Activated naive CD4-positive, alpha-beta T cell treated with anti-CD3 and anti-CD28 coated beads for 36 hours (primary cell): ENCODE measurements at regions of chr2 and their contacts with region 1.

Region 1: DNA sequence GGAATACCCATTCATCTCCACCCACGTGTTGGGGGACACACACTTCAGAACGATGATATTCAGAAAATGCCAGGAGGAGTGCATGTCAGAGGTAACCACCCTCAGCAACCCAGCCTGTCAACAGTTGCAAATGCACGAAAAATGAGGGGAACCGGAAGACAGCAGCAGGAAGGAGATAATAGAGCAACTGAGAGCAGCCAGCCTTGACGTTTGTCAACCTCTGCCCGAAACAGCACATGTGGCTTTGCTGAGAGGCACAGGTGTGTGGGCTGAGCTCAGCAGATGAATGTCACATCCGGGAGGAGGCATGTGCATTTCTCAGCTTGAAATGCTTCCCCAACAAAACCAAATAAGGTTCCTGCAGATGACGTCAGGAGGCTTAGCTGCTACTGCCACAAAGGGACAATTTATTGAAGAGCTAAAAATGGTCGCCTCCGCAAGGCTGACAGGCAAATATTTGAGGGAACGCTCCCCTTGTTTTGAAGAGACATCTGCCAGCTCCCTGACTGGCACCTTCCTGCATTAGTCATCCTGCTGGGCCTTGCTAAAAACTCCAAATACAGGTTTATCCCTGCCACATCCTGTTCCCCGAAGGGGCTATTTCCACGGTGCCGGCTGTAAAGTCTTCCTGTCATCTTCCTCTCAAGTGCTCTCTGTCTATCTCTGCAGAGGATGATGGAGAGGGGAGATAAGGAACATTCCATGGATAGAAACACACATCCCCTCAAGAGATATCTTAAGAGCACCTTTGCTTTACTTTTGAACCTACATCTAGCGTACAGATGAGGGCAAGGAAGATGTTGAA is 418.9 kb downstream of the NBAS start:
- DNase-seq: peak; percentile 90
- H3K4me3 Mint-ChIP-seq: peak overlapping the region; percentile 20
- H3K27ac Mint-ChIP-seq: peak overlapping the region; percentile 90
- H3K4me1 Mint-ChIP-seq: peaks cover 23% of the 10 kb centered on the region
- H3K27me3 Mint-ChIP-seq: peaks cover 5% of the 10 kb centered on the region

Region 2: GRCh38 chr2:15243762-15244161 is 101.5 kb after region 1 on chr2:
- CTCF ChIA-PET with region 1: no interaction called
- intact Hi-C with region 1: no loop called
- DNase-seq: no peak
- H3K4me3 Mint-ChIP-seq: no peak overlapping the region
- H3K27ac Mint-ChIP-seq: no peak overlapping the region
- H3K4me1 Mint-ChIP-seq: peaks cover 4% of the 10 kb centered on the region
- H3K27me3 Mint-ChIP-seq: no peaks in the 10 kb centered on the region

Region 3: DNA sequence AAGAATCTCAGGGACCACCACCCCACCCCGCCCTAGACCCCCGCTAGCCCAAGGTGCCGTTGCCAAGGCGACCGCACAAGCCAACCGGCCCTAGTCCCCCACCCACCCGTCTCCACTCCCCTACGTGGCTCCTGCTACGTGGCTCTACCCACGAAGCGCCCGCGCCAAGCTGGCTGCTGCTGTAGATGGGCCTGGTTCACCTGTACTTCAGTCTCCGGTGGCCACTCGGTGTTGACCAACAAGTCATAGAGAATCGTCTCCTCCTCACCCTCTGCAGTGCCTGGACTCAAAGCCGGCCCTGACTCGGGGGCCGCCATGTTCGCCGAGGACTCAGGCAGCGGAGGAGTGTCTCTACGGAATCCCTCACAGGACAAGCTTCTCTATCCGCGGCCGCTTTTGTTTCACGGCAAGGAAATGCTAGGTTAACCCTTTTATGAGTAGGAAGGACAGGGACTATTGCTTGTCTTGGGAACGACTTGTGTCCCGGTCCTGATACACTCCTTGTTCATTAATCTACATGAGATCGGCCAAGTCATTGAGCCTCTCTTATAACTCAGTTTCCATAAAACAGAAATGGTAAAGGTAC is 418.8 kb after region 1 on chr2 and contains the start of gene NBAS:
- CTCF ChIA-PET with region 1: no interaction called
- intact Hi-C with region 1: loop called (anchors 1 kb)
- DNase-seq: peak; percentile 94
- H3K4me3 Mint-ChIP-seq: peak within 1 kb of the TSS; percentile 98
- H3K27ac Mint-ChIP-seq: peak within 1 kb of the TSS; percentile 92
- H3K4me1 Mint-ChIP-seq: peaks cover 32% of the 10 kb centered on the region
- H3K27me3 Mint-ChIP-seq: no peaks in the 10 kb centered on the region
- total RNA-seq, gene NBAS: 45.5 to 46.4 TPM

Region 4: DNA sequence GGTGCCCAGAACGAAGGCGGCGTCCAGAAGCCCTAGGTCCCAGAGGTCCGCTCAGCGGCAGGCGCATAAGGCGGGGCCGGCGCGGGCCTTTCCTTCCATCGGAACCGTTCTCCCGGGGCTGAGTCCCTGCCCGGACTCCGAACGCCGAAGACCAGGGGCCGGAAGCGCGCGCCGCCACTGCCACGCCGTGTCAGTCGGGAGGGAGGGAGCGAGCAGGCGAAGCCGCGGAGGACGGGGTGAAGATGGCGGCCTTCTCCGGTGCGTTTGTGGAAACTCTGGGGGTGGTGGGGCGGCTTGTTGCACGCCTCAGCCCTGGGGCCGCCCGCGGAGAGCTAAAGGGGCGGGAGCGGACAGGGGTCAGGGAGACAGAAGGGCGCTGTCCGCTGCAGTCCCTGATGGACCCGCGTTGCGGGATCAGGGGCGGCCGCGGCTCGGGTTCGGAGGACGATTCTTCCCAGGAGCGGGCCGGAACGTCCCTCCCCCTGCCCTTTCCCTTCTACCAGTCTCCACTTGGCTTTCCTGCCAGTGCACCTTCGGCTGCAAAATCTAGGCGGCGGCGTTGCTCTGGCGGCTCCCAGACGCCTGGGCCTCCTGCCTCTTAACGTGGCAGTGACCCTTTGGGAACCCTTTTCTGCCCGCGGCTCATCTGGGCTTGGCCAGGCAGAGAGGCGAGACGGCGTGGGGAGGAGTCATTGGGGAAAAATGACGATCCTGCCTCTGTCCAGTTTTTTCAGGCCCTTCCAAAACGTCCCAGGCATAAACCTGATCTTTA is 449.6 kb after region 1 on chr2 and contains the start of gene DDX1:
- CTCF ChIA-PET with region 1: no interaction called
- intact Hi-C with region 1: loop called (anchors 1 kb)
- DNase-seq: peak; percentile 85
- H3K4me3 Mint-ChIP-seq: peak within 1 kb of the TSS; percentile 88
- H3K27ac Mint-ChIP-seq: peak within 1 kb of the TSS; percentile 86
- H3K4me1 Mint-ChIP-seq: peaks cover 36% of the 10 kb centered on the region
- H3K27me3 Mint-ChIP-seq: no peaks in the 10 kb centered on the region
- total RNA-seq, gene DDX1: 61.7 to 64.1 TPM